Left colon (tissue), 2 donors: ENCODE measurements at regions of chr18 and their contacts with region 1.

Region 1: GRCh38 chr18:27298214-27298804 is 113.2 kb upstream of the CHST9 start:
- DNase-seq: no peak
- ATAC-seq: no peak

Region 2: DNA sequence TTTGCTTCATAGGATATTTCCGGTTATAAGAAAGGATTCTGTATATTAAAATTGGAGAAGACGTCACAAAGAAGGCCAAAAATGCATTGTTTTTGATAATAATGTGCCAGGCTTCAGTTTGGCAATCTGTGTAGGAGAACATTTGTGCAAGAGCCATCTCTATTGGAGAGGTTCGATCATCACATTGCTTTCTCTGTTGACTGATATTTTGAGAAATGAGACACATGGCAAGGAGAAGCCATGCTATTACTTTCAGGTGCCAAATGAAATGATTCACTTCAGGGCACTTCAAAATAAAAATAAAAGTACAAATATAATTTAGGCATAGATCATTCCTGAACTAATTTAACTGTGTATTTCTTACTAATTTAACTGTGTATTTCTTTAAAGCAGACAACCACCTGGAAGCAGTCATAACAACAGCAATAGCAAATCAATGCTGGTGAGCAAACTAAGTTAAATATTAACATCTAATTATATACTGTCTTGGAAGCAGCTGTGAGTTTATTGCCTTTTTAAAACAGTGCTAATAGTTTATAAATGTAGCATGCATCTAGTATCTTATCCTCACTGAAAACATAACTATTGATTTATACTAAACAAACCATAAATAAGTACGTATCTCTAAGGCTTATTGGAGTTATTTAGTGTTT is 63.0 kb before region 1 on chr18:
- intact Hi-C with region 1: loop called in 1 of 2 experiments (anchors 10 kb)
- DNase-seq: no peak
- ATAC-seq: no peak

Region 3: DNA sequence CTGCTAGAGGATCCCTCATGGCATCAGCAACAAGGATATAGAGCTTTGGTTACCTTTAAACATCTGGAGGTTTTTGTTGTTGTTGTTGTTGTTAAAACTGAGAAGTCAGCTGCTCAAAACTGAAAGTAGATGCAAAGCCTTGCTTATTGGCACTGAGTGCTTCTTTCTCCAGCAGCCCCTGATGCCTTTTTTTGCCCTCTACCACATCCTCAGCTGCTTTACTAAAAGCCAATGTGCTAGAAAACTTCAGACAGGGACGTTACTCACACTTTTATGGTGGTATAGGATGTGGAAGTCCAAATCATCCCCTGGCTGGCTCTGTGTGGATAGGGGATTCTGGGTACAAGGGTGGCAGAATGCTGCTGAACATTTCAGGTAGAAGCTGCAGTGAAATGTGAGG is 34.9 kb before region 1 on chr18:
- intact Hi-C with region 1: no loop called
- DNase-seq: no peak
- ATAC-seq: no peak